ENCODE measurements at regions of chr1 and their contacts with region 1.

Region 1: GRCh38 chr1:20493839-20494608 is 8.0 kb upstream of the CAMK2N1 start:
- DNase-seq: peak; percentile 94
- H3K4me3 ChIP-seq: no peak overlapping the region
- H3K27ac ChIP-seq: no peak overlapping the region
- H3K4me1 ChIP-seq: no peaks in the 10 kb centered on the region
- H3K27me3 ChIP-seq: no peaks in the 10 kb centered on the region
- CTCF ChIP-seq: peak; percentile 93

Region 2: GRCh38 chr1:19918057-19918456 is 576.0 kb before region 1 on chr1:
- intact Hi-C with region 1: loop called (anchors 5 kb)
- DNase-seq: peak; percentile 89
- H3K4me3 ChIP-seq: no peak overlapping the region
- H3K27ac ChIP-seq: no peak overlapping the region
- H3K4me1 ChIP-seq: no peaks in the 10 kb centered on the region
- H3K27me3 ChIP-seq: no peaks in the 10 kb centered on the region
- CTCF ChIP-seq: peak; percentile 83

Region 3: DNA sequence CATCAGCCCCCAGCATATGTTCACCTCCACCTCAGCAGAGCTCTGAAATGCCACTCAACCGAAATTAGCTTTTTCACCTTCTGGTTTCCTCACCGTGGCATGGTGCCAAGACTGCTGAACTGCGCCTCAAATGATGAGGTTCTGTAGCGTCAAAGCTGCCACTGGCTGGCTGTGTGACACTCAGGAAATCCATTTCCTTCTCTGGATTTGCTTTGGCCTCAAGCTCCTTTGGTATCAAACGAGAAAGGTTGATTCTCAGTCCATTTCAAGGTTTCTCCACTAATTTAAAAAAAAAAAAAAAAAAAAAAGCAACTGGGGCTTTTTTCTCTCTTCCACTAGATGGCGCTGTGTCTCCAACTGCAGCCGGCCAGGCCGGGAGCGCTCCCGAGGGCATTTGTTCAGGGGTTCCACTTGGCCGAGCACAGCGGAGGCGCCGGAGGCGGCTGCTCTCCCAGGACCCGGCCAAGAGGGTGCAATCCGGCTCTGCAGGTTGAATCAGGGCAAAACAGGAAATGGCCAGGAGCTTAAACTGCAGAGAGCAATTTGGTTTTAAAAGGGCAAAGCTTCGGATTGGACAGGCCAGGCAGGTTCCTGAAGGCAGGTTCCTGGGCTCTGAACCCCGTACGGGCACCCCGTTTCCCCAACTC is 281.2 kb before region 1 on chr1:
- intact Hi-C with region 1: loop called (anchors 5 kb)
- DNase-seq: peak; percentile 78
- H3K4me3 ChIP-seq: no peak overlapping the region
- H3K27ac ChIP-seq: peak overlapping the region; percentile 76
- H3K4me1 ChIP-seq: peaks cover 8% of the 10 kb centered on the region
- H3K27me3 ChIP-seq: no peaks in the 10 kb centered on the region
- CTCF ChIP-seq: peak; percentile 72

Region 4: DNA sequence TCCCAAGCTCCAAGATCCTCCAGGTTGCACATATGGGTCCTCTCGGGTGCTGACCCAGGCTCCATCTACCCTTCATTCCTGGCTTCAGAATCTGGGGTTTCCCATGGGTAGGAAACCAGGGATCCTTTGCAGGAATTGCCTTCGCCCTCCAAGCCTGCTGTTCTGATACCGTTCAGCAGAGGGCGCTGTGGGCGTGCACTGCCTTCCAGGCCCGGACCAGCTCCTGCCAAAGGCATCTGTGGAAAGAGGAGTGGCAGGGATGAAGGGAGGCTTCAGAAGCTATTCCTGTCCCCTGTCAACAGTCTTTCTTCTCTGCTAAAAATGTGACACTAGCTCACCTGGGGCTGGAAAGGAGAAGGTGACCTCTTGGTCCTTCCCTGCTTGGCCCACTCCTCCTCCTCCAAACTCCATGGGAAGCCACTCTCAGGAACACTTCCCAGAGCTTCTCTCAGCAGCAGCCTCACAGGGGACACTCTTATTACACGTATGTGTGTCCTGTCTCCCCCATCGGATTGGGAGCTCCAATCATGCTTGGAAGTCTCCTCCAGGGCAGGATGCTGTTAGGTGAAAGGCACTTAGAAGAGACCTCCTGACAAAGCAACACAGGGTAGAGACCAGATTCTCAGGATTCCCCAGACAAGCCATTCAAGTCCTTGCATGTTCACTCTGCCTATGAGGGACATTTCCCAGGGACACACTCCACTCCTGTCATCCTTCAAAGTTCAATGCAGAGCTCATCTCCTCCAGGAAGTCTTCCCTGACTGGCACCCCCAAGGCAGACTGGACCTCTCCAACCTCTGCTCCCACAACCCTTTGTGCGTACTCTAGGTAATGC is 132.0 kb before region 1 on chr1:
- intact Hi-C with region 1: loop called (anchors 5 kb)
- DNase-seq: peak; percentile 75
- H3K4me3 ChIP-seq: no peak overlapping the region
- H3K27ac ChIP-seq: no peak overlapping the region
- H3K4me1 ChIP-seq: peaks cover 8% of the 10 kb centered on the region
- H3K27me3 ChIP-seq: peaks cover 26% of the 10 kb centered on the region
- CTCF ChIP-seq: peak; percentile 70

Region 5: GRCh38 chr1:20376880-20377494 is 117.0 kb before region 1 on chr1:
- intact Hi-C with region 1: loop called (anchors 5 kb)
- DNase-seq: peak; percentile 52
- H3K4me3 ChIP-seq: no peak overlapping the region
- H3K27ac ChIP-seq: no peak overlapping the region
- H3K4me1 ChIP-seq: no peaks in the 10 kb centered on the region
- H3K27me3 ChIP-seq: no peaks in the 10 kb centered on the region
- CTCF ChIP-seq: peak; percentile 70

Region 6: DNA sequence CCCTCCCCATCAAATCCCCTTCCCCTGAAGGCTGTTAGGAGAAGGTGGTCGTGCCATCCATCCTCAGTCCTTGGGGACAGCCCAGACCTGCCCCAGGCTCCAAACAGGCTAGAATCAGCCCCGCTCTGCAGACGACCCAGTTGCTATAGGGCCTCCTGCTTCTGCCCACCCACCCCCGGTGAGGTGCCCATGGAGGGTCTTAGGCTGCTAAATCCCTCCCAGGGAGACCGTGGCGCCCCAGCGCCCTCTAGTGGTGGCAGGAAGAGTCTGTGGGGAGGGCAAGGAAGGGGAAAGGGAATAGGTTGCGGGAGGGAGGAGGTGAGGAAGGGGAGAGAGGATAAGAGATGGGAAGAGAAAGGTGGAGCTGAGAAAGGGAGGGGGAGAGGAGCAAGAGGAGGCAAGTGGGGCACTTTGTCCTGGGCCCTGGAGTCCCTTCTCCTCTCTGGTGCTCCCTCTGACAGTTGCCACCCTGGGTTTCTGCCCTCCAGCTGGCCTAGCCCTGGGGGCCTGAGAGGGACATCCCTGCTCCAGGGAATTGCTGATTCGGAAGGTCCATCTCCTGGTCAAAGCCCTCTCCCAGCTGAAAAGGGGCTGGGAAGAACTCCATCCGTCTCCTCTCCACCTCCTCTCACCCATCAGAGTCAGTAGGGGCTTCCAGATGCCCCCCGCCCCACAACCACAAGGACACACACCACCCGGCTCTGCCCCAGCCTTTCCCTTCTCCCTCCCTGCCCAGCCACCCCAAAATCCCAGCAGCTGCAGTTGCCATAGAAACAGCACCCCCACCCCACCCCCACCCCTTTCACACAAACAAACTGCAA is 63.5 kb before region 1 on chr1:
- intact Hi-C with region 1: loop called (anchors 1 kb)
- DNase-seq: peak; percentile 47
- H3K4me3 ChIP-seq: no peak overlapping the region
- H3K27ac ChIP-seq: no peak overlapping the region
- H3K4me1 ChIP-seq: no peaks in the 10 kb centered on the region
- H3K27me3 ChIP-seq: no peaks in the 10 kb centered on the region
- CTCF ChIP-seq: peak; percentile 59